ENCODE measurements at regions of chr15 and their contacts with region 1.

Region 1: DNA sequence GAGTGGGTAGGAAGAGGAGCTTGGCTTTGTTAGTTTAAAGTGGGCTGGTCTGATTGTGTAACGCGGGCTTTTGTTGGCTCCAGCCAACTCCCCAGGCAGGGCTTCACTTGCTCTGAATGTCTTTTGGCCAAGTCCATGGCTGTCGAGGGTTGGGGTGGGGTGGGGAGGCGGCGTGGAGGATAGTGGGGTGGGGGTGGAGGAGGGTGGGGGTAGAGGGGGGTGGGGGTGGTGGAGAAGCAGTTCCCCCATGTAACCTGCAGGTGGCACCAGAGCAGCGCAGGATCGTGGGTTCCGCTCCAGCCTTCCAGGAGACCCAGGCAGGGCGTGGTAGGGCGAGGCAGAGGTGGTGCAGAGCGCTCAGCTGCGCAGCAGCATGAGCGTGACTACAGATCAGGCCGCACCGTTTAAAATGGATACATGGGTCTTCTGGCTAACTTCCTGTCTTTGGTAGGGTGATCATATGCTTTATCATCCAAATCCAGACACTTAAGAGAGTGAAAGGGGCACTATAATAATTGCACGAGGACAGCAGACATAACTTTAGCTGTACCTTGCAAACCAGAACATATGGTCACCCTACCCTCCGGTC is 28.3 kb downstream of the GOLGA6A start:
- DNase-seq: peak; percentile 94

Region 2: DNA sequence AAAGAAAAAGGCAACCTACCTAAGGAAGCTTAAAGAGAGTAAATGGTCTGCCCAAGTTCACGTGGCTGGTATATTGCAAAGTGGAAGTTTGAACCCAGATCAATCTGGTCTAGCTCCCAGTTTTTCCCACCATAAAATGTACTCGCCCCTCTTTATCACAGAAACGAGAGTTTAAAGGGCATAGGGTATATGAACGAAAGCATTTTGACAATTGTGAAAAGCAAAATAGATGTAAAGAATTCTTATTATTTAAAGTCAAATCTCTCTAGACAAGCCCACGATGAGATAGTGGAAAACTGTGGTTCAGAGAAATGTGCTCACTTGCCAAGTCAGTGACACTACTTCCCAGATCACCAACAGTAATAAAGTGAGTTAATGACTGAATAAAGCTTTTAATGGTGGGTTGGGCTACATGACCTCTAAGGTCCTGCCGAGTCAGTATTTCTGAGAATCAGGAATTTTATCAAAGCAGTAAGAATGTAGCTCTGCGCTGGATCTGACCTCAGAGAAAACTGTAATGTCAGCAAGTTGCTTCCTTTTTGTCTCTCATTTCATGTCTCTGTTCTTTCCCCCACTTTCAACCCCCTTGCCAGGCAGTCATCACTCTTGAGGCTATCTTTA is 1025.1 kb before region 1 on chr15:
- intact Hi-C with region 1: no loop called
- DNase-seq: no peak

Region 3: DNA sequence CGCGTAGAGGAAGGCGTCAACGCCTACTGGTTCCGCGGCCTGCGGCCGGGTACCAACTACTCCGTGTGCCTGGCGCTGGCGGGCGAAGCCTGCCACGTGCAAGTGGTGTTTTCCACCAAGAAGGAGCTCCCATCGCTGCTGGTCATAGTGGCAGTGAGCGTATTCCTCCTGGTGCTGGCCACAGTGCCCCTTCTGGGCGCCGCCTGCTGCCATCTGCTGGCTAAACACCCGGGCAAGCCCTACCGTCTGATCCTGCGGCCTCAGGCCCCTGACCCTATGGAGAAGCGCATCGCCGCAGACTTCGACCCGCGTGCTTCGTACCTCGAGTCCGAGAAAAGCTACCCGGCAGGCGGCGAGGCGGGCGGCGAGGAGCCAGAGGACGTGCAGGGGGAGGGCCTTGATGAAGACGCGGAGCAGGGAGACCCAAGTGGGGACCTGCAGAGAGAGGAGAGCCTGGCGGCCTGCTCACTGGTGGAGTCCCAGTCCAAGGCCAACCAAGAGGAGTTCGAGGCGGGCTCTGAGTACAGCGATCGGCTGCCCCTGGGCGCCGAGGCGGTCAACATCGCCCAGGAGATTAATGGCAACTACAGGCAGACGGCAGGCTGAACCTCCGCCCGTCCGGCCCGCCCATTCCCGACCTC is 80.5 kb after region 1 on chr15:
- intact Hi-C with region 1: loop called in 1 of 2 experiments (anchors 5 kb)
- DNase-seq: peak; percentile 87

Region 4: GRCh38 chr15:74322181-74323076 is 268.4 kb after region 1 on chr15:
- intact Hi-C with region 1: loop called in 1 of 2 experiments (anchors 5 kb)
- DNase-seq: peak; percentile 89